Lower leg skin (tissue), 4 donors: ENCODE measurements at regions of chr18 and their contacts with region 1.

Region 1: GRCh38 chr18:52409727-52410126 is 69.7 kb downstream of the DCC start:
- DNase-seq: no peak
- H3K4me3 ChIP-seq: no peak overlapping the region
- CTCF ChIP-seq: no peak
- POLR2A ChIP-seq: no peak

Region 2: DNA sequence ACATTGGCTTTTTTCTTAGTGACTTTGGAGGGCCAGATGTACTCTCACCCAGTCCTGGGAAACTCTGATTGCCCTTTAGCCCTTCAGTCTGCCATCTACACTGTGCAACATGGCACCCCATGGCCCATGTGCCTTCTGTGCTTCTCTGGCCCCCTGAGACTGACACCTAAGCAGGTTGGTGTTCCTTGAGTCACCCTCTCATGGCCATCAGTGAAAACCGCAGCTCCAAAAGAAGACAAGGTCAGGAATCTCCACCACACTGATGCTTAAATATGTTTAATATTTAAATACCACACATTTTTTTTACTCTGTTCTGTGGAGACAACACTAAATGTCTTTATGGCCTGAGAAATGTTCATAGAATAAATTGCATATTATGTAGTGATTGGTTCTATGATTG is 45.9 kb before region 1 on chr18:
- intact Hi-C with region 1: loop called (anchors 1 kb)
- DNase-seq: no peak
- H3K4me3 ChIP-seq: no peak overlapping the region
- CTCF ChIP-seq: no peak
- POLR2A ChIP-seq: no peak

Region 3: GRCh38 chr18:53056064-53056463 is 646.3 kb after region 1 on chr18:
- intact Hi-C with region 1: no loop called
- DNase-seq: no peak
- H3K4me3 ChIP-seq: no peak overlapping the region
- CTCF ChIP-seq: no peak
- POLR2A ChIP-seq: no peak

Region 4: DNA sequence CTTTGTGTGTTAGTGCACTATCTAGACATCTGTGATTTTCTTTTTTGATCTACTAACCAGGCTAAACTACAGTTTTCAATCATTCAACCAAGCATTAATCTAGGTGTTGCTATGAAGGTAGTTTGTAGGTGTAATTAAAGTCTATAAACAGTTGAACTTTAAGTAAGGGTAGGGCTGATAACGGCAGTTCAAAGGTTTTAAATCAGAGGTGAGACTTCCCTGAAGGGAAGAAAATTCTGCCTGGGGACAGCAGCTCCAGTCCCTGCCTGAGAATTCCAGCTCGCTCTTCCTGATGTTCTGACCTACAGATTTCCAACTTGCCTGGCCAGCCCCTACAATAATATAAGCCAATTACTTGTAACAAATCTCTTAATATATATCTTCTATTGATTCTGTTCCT is 1150.8 kb after region 1 on chr18:
- intact Hi-C with region 1: no loop called
- DNase-seq: no peak
- H3K4me3 ChIP-seq: no peak overlapping the region
- CTCF ChIP-seq: no peak
- POLR2A ChIP-seq: no peak